ENCODE measurements at regions of chr4 and their contacts with region 1.

Region 1: GRCh38 chr4:125762537-125762936 is 447.8 kb downstream of the FAT4 start:
- DNase-seq: no peak
- ATAC-seq: no peak

Region 2: GRCh38 chr4:125582302-125582701 is 180.2 kb before region 1 on chr4:
- intact Hi-C with region 1: no loop called
- DNase-seq: no peak
- ATAC-seq: no peak

Region 3: DNA sequence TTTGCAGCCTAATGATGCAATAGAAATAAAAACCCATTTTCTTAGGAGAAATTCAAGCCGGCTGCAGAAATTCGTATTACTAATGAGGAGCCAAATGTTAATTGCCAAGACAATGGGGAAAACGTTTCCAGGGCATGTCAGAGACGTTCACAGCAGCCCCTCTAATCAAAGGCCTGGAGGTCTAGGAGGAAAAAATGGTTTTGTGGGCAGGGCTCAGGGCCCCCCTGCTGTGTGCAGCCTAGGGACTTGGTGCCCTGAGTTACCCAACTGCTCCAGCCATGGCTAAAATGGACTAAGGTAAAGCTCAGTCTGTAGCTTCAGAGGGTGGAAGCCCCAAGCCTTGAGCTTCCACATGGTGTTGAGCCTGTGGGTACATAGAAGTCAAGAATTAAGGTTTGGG is 13.6 kb after region 1 on chr4:
- intact Hi-C with region 1: loop called (anchors 2 kb)
- DNase-seq: no peak
- ATAC-seq: no peak